ENCODE measurements at regions of chr14 and their contacts with region 1.

Region 1: GRCh38 chr14:63478010-63478409 is 65.2 kb downstream of the PPP2R5E start:
- DNase-seq: peak; percentile 38
- H3K4me3 Mint-ChIP-seq: peak overlapping the region; percentile 5
- H3K27ac Mint-ChIP-seq: no peak overlapping the region
- H3K4me1 Mint-ChIP-seq: peaks cover 45% of the 10 kb centered on the region
- H3K27me3 Mint-ChIP-seq: no peaks in the 10 kb centered on the region

Region 2: DNA sequence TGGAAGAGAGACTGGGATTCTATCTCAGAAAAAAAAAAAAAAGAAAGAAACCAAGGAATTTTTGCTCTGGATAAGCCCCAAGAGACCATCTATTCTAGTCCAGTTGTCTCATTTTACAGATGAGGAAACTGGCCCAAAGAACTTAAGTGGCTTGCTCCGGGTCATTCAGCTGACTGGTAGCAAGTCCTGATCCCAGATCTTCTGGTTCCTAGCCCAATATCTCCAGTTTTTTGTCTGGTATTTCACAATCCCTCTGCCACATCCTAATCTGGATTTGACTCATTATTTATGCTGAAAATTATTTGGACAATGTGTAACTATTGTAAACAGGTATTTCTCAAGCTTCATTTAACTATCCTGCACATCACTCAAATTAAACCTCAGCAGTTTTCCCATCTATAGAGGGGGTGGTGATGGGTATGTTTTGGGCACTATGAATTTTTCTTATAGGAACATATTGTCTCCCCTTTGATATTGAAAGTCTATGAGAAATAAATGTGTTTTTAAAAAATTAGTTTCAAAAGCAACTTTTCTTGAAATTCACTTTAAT is 21.8 kb after region 1 on chr14:
- CTCF ChIA-PET with region 1: no interaction called
- POLR2A ChIA-PET with region 1: no interaction called
- intact Hi-C with region 1: no loop called
- DNase-seq: no peak
- H3K4me3 Mint-ChIP-seq: no peak overlapping the region
- H3K27ac Mint-ChIP-seq: no peak overlapping the region
- H3K4me1 Mint-ChIP-seq: peaks cover 12% of the 10 kb centered on the region
- H3K27me3 Mint-ChIP-seq: no peaks in the 10 kb centered on the region

Region 3: DNA sequence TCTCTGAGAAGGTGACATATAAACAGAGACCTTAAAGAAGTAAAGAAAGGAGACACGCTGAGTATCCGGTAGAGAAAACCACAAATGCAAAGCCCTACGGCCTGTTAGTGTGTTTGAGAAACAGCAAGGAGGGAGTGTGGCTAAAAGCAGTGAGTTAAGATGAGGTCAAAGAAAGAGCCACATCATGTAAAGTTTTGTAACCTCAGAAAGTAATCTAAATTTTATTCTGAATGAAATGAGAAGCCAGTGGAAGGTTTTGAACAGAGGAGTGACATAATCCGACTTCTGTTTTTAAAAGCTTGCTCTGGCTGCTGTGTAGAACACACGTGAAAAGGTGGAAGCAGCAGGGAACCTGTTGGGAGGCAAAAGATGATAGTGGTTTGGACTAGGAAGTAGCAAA is 32.5 kb after region 1 on chr14:
- CTCF ChIA-PET with region 1: no interaction called
- POLR2A ChIA-PET with region 1: no interaction called
- intact Hi-C with region 1: loop called (anchors 2 kb)
- DNase-seq: peak; percentile 21
- H3K4me3 Mint-ChIP-seq: no peak overlapping the region
- H3K27ac Mint-ChIP-seq: no peak overlapping the region
- H3K4me1 Mint-ChIP-seq: peaks cover 57% of the 10 kb centered on the region
- H3K27me3 Mint-ChIP-seq: no peaks in the 10 kb centered on the region

Region 4: GRCh38 chr14:63524537-63525155 is 46.6 kb after region 1 on chr14:
- CTCF ChIA-PET with region 1: no interaction called
- POLR2A ChIA-PET with region 1: no interaction called
- intact Hi-C with region 1: no loop called
- DNase-seq: peak; percentile 12
- H3K4me3 Mint-ChIP-seq: no peak overlapping the region
- H3K27ac Mint-ChIP-seq: no peak overlapping the region
- H3K4me1 Mint-ChIP-seq: peaks cover 16% of the 10 kb centered on the region
- H3K27me3 Mint-ChIP-seq: no peaks in the 10 kb centered on the region

Region 5: DNA sequence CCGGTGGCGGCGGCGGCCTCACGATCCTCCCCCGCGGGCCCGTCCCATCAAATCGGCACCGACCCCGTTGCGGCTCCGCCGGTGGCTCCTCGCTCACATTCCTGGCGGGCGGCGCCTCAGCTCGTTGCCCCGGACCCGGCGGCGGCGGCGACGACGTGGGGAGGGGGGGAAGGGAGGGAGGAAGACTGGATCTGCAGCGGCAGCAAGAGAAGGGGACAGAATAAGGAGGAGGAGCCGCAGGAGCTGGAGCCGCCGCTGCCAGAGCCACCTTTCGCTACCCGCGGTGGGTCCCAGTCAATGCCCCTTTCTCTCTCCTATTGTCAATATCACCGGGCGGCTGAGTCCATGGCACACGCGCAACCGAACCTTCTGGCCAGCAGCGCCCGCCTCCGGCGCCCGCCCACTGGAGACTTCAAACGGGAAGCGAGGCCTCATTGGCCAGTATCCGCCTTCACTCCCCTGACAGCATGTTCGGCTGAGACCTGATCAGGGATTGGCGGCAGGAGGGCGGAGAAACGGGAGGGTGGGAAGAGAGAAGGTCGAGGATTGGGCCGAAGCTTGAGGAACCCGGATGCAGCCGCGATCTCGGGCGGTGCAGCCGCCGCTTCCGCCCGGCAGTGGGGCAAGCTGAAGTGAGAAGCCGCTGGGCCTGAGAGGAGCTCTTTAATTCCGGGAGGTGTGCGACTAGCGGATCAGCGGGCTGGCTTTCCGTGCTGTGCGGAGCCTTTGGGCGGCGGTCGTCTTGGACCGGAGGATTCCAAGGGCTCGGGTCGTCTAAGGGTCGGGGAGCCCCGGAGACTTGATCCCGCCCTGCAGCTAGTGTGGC is 65.2 kb after region 1 on chr14 and contains the start of gene PPP2R5E:
- CTCF ChIA-PET with region 1: interaction called, 5 read pairs
- POLR2A ChIA-PET with region 1: interaction called, 3 read pairs
- intact Hi-C with region 1: loop called (anchors 2 kb)
- DNase-seq: peak; percentile 99
- H3K4me3 Mint-ChIP-seq: peak within 1 kb of the TSS; percentile 82
- H3K27ac Mint-ChIP-seq: peak within 1 kb of the TSS; percentile 86
- H3K4me1 Mint-ChIP-seq: peaks cover 31% of the 10 kb centered on the region
- H3K27me3 Mint-ChIP-seq: no peaks in the 10 kb centered on the region
- total RNA-seq, gene PPP2R5E: 37.7 to 37.8 TPM

Region 6: GRCh38 chr14:63713765-63714164 is 235.8 kb after region 1 on chr14:
- CTCF ChIA-PET with region 1: no interaction called
- POLR2A ChIA-PET with region 1: no interaction called
- intact Hi-C with region 1: loop called (anchors 2 kb)
- DNase-seq: no peak
- H3K4me3 Mint-ChIP-seq: no peak overlapping the region
- H3K27ac Mint-ChIP-seq: no peak overlapping the region
- H3K4me1 Mint-ChIP-seq: peaks cover 20% of the 10 kb centered on the region
- H3K27me3 Mint-ChIP-seq: no peaks in the 10 kb centered on the region

Region 7: DNA sequence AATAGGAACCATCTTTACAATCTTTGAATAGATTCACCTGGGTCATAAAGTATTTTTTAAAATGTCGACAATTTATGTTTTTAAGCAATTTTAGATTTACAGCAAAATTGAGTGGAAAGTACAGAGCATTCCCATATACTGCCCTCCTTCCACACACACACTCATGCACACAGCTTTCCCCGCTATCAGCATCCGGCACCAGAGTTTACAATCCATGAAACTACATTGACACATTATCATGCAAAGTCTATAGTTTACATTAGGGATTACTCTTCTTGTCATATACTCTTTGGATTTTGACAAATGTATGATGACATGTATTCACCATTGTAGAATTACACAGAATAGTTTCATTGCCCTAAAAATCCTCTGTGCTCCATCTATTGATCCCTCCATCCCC is 365.8 kb after region 1 on chr14:
- CTCF ChIA-PET with region 1: no interaction called
- POLR2A ChIA-PET with region 1: no interaction called
- intact Hi-C with region 1: no loop called
- DNase-seq: no peak
- H3K4me3 Mint-ChIP-seq: no peak overlapping the region
- H3K27ac Mint-ChIP-seq: no peak overlapping the region
- H3K4me1 Mint-ChIP-seq: no peaks in the 10 kb centered on the region
- H3K27me3 Mint-ChIP-seq: no peaks in the 10 kb centered on the region

Region 8: DNA sequence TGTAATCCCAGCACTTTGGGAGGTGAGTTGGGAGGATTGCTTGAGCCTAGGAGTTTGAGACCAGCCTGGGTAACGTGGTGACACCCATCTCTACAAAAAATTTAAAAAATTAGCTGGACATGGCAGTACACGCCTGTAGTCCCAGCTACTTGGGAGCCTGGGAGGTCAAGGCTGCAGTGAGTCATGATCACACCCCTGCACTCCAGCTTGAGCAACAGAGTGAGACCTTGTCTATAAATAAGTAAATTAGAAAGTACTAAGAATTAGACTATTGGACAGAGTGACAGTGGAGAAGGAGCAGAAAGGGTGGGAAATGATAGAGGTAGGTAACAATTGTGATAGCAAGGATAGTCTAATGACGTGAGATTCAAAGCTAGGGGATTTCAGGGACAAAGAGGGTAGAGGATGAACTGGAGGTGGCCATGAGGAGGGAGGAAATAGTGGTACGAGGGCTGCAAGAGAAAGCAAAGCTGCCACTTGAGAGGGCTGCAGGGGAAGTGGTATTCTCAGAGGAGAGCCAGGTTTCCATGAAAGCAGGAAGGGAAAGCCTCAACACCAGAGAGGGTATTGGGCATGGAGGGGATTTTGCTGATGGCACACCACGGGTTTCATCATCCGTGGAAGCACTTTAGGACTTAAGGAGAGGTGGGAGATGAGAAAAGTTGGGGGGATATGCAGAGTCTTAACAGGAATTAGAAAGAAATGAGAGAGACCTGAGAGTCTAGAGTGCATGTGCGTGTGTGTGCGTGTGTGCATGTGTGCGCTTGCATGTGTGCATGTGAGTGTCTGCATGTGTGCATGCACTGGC is 460.4 kb after region 1 on chr14:
- CTCF ChIA-PET with region 1: no interaction called
- POLR2A ChIA-PET with region 1: no interaction called
- intact Hi-C with region 1: loop called (anchors 1 kb)
- DNase-seq: peak; percentile 33
- H3K4me3 Mint-ChIP-seq: no peak overlapping the region
- H3K27ac Mint-ChIP-seq: no peak overlapping the region
- H3K4me1 Mint-ChIP-seq: peaks cover 41% of the 10 kb centered on the region
- H3K27me3 Mint-ChIP-seq: no peaks in the 10 kb centered on the region

Region 9: GRCh38 chr14:64178814-64179213 is 700.8 kb after region 1 on chr14:
- CTCF ChIA-PET with region 1: no interaction called
- POLR2A ChIA-PET with region 1: no interaction called
- intact Hi-C with region 1: loop called (anchors 5 kb)
- DNase-seq: no peak
- H3K4me3 Mint-ChIP-seq: no peak overlapping the region
- H3K27ac Mint-ChIP-seq: no peak overlapping the region
- H3K4me1 Mint-ChIP-seq: peaks cover 29% of the 10 kb centered on the region
- H3K27me3 Mint-ChIP-seq: no peaks in the 10 kb centered on the region

Measured in activated CD4-positive, alpha-beta memory T cell treated with anti-CD3 and anti-CD28 coated beads for 36 hours (primary cell).